ENCODE measurements at regions of chr10 and their contacts with region 1.

Region 1: GRCh38 chr10:119725828-119726675 is at the start of gene INPP5F:
- DNase-seq: peak; percentile 96 to 100 (median 98)
- H3K4me3 ChIP-seq: peak within 1 kb of the TSS; percentile 73
- H3K4me3 Mint-ChIP-seq: peak within 1 kb of the TSS; percentile 89 to 93 (median 90)
- H3K27ac ChIP-seq: peak within 1 kb of the TSS; percentile 72
- H3K27ac Mint-ChIP-seq: peak within 1 kb of the TSS; percentile 51 to 98 (median 84)
- H3K4me1 ChIP-seq: peaks cover 15% of the 10 kb centered on the region
- H3K4me1 Mint-ChIP-seq: peaks cover 17 to 35% (median 29%) of the 10 kb centered on the region in 3 donors
- H3K27me3 ChIP-seq: no peaks in the 10 kb centered on the region
- H3K27me3 Mint-ChIP-seq: no peaks in the 10 kb centered on the region
- total RNA-seq, gene INPP5F: 22.3 to 23.0 TPM

Region 2: GRCh38 chr10:119120413-119120867 is 605.6 kb before region 1 on chr10:
- CTCF ChIA-PET with region 1: no interaction called
- POLR2A ChIA-PET with region 1: no interaction called
- DNase-seq: peak in 1 of 5 donors; percentile 53
- H3K4me3 ChIP-seq: no peak overlapping the region
- H3K4me3 Mint-ChIP-seq: peak overlapping the region in 5 of 7 donors; percentile 5 to 44 (median 23)
- H3K27ac ChIP-seq: no peak overlapping the region
- H3K27ac Mint-ChIP-seq: peak overlapping the region; percentile 23 to 83 (median 56)
- H3K4me1 ChIP-seq: no peaks in the 10 kb centered on the region
- H3K4me1 Mint-ChIP-seq: peaks cover 10 to 20% (median 14%) of the 10 kb centered on the region in 3 donors
- H3K27me3 ChIP-seq: no peaks in the 10 kb centered on the region
- H3K27me3 Mint-ChIP-seq: no peaks in the 10 kb centered on the region

Region 3: DNA sequence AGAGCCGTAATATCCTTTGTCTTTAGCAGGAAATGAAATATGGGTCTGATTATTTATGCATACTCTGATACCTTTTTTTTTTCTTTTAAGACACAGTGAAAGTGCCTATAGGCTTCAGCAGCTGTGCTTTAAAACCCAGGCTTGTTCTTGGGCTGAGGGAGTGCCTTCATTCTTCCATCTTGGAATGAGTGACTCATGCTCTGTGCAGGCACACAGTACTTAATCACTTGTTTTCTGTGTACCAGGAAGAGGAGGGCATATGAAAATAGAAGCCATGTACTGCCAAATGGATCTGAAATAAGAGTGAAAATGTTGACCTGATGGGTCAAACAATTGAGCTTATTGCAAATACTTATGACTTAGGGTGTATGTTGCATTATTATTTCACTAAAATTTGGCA is 11.8 kb after region 1 on chr10:
- CTCF ChIA-PET with region 1: interaction called, 5 read pairs
- POLR2A ChIA-PET with region 1: interaction called, 16 read pairs
- DNase-seq: no peak
- H3K4me3 ChIP-seq: no peak overlapping the region
- H3K4me3 Mint-ChIP-seq: no peak overlapping the region
- H3K27ac ChIP-seq: no peak overlapping the region
- H3K27ac Mint-ChIP-seq: peak overlapping the region in 1 of 8 donors; percentile 24
- H3K4me1 ChIP-seq: peaks cover 17% of the 10 kb centered on the region
- H3K4me1 Mint-ChIP-seq: peaks cover 11 to 32% (median 23%) of the 10 kb centered on the region in 3 donors
- H3K27me3 ChIP-seq: no peaks in the 10 kb centered on the region
- H3K27me3 Mint-ChIP-seq: no peaks in the 10 kb centered on the region

Region 4: DNA sequence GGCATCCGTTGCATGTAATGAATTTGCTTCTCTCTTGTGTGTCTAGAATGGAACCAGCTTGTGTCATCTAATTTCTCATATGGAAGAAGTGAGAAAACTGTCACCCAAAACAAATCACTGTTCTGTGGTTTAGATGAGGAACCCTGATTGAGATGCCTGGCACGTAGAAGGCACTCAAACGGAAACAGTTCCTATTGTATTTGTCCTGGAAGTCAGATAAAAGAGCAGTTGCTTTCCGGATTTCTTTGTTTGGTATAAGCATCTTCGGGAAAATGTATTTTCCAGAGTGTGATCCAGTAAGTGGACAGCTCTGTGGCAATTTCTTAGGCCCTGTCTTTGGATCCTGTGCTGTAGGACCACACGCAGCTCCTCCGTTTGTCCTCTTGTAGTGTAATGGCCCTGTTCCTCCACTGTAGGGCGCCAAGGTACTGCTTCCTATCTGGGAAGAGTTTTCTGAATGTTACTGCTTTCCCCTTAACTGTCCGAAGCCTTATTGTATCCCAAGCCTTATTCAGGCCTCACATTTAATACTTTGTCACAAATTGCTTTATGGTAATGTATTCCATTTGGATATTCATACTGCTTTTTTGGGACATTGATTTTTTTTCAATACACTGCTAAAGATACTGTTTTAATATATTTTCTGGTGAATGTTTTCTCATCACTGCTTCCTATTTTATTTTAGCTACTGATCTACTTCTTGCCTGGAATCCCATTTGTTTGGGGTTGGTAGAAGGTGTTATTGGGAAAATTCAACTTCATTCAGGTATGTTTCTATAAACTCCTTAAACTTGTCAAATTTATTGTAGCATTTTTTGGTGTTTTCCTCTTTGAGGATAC is 24.6 kb after region 1 on chr10:
- CTCF ChIA-PET with region 1: interaction called, 14 read pairs
- POLR2A ChIA-PET with region 1: no interaction called
- DNase-seq: peak; percentile 26 to 58 (median 35)
- H3K4me3 ChIP-seq: no peak overlapping the region
- H3K4me3 Mint-ChIP-seq: no peak overlapping the region
- H3K27ac ChIP-seq: no peak overlapping the region
- H3K27ac Mint-ChIP-seq: peak overlapping the region in 2 of 8 donors; percentile 18 to 26
- H3K4me1 ChIP-seq: no peaks in the 10 kb centered on the region
- H3K4me1 Mint-ChIP-seq: peaks cover 4 to 8% (median 6%) of the 10 kb centered on the region in 3 donors
- H3K27me3 ChIP-seq: no peaks in the 10 kb centered on the region
- H3K27me3 Mint-ChIP-seq: peaks cover 0 to 3% of the 10 kb centered on the region in 2 donors